ENCODE measurements at regions of chr4 and their contacts with region 1.

Region 1: DNA sequence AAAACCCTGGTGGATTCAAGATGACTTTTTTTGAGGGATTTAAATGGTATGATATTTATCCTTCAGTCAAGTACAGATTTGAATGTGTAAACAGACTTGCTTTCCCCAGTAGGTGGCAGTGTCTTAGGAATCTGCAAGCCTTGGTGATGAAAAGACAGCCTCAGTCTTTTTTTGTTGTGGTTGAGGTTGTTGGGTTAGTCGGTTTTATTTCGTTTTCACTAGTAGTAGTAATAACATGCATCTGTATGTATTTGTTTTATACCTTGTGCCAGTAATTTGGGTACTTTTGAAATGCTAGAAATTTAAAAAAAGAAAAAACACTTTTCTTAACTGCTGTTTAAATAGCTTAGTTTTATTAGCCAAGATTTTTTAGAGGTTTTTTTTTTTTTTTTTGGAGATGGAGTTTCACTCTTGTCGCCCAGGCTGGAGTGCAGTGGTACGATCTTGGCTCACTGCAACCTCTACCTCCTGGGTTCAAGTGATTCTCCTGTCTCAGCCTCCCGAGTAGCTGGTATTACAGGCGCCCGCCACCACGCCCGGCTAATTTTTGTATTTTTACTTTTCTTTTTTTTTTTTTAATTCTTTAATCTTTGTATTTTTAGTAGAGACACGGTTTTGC is 39.2 kb downstream of the COPS4 start:
- DNase-seq: peak; percentile 76
- ATAC-seq: peak; percentile 91
- H3K4me3 Mint-ChIP-seq: no peak overlapping the region
- H3K27ac Mint-ChIP-seq: peak overlapping the region; percentile 52
- H3K4me1 Mint-ChIP-seq: peaks cover 25% of the 10 kb centered on the region
- H3K27me3 Mint-ChIP-seq: no peaks in the 10 kb centered on the region

Region 2: DNA sequence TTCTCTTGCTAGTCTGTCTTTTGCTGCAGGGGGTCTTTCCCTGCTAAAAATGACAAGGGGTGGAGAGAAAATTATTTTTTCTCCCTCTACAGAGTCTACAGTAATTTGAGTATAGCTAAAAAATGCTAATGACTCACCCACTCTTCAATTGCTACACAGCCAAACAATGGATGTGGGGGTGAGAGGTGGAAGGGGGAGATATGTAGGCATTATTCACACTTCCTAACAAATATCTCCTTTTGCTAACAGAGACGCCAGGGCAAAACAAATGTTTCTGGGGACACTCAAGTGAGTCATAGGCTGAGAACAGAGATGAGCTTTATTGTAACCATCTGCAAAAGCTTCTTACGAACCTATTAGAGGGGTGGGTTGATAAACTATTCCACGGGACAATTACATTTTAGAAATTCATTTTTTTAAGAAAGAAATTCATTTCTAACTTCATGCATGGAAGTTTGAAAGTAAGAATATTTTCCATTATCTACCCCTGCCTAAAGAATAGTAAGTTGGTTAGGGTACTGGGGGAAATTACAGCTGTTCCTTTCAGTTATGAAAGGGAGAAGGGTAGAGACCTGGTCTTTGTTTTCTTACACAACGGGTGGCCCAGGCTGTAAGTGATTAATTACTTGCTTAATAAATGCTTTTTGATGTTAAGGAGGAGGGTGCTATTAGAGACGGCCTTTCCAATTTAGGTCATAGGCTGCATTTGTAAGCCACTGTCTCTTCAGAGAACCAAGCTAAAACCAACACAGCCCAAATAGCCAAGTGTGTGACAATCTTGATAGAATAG is 288.4 kb before region 1 on chr4:
- CTCF ChIA-PET with region 1: no interaction called
- DNase-seq: peak; percentile 11
- ATAC-seq: no peak
- H3K4me3 Mint-ChIP-seq: no peak overlapping the region
- H3K27ac Mint-ChIP-seq: no peak overlapping the region
- H3K4me1 Mint-ChIP-seq: no peaks in the 10 kb centered on the region
- H3K27me3 Mint-ChIP-seq: no peaks in the 10 kb centered on the region

Region 3: DNA sequence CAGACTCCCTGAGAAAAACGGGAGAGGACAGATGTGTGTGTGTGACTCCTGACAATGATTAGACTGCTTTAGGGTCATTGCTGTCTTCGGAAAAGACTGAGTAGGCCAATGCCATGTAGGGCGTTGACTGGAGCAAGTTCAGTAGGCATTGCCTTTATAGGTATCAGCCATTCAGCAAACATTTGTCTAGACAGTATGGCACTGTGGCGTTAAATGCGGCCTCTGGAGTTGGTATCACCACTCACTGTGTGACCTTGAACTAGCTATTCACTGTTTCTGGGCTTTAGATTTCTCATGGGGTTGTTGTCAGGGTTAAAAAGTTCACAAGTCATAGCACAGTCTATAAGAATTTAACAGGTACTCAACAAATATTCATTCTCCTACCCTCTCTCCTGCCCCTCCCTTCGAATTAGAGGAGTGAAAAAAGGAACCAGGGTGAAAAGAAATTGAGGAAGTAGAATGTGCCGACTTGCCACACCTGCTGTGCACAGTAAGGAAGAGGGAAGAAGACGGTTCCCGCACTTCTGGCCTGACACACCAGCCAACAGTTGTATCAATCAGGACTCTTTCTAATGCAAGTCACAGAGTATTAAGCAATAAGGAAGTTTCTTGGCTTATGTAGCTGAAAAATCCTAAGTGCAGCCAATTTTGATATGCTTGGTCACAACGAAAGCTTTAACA is 123.5 kb after region 1 on chr4:
- CTCF ChIA-PET with region 1: no interaction called
- DNase-seq: no peak
- ATAC-seq: no peak
- H3K4me3 Mint-ChIP-seq: no peak overlapping the region
- H3K27ac Mint-ChIP-seq: no peak overlapping the region
- H3K4me1 Mint-ChIP-seq: peaks cover 1% of the 10 kb centered on the region
- H3K27me3 Mint-ChIP-seq: no peaks in the 10 kb centered on the region

Region 4: GRCh38 chr4:83237591-83237990 is 163.4 kb after region 1 on chr4:
- CTCF ChIA-PET with region 1: interaction called, 13 read pairs
- DNase-seq: no peak
- ATAC-seq: no peak
- H3K4me3 Mint-ChIP-seq: no peak overlapping the region
- H3K27ac Mint-ChIP-seq: no peak overlapping the region
- H3K4me1 Mint-ChIP-seq: peaks cover 34% of the 10 kb centered on the region
- H3K27me3 Mint-ChIP-seq: peaks cover 81% of the 10 kb centered on the region

Region 5: DNA sequence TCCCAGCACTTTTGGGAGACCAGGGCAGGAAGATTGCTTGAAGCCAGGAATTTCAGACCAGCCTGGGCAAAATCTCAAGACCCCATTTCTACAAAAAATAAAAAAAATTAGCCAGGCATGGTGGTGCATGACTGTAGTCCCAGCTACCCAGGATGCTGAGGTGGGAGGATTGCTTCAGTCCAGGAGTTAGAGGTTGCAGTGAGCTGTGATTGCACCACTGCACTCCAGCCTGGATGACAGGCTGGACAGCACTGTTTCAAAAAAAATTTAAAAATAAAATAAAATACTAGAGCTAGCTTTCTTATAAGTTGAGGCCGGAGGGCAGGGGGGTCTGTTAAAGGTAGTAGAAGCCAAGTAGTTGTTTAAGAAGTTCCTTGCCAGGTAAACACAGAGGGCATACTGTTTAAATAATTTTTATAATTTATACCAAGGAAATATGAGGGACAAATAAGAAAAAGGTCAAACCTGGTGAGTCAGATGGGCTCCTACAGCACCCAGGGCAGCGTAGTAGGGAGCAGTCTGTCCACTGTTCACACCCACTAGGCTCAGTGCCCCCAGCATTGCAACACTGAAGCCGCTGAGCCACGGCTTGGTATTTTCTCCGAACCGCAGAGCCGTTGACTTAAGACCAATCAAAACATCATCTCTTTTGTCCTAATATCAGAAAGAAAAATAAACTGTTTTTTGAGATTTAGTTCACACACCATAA is 193.1 kb after region 1 on chr4:
- CTCF ChIA-PET with region 1: interaction called, 55 read pairs
- DNase-seq: no peak
- ATAC-seq: no peak
- H3K4me3 Mint-ChIP-seq: no peak overlapping the region
- H3K27ac Mint-ChIP-seq: no peak overlapping the region
- H3K4me1 Mint-ChIP-seq: peaks cover 30% of the 10 kb centered on the region
- H3K27me3 Mint-ChIP-seq: no peaks in the 10 kb centered on the region